ENCODE measurements at regions of chr15 and their contacts with region 1.

Region 1: DNA sequence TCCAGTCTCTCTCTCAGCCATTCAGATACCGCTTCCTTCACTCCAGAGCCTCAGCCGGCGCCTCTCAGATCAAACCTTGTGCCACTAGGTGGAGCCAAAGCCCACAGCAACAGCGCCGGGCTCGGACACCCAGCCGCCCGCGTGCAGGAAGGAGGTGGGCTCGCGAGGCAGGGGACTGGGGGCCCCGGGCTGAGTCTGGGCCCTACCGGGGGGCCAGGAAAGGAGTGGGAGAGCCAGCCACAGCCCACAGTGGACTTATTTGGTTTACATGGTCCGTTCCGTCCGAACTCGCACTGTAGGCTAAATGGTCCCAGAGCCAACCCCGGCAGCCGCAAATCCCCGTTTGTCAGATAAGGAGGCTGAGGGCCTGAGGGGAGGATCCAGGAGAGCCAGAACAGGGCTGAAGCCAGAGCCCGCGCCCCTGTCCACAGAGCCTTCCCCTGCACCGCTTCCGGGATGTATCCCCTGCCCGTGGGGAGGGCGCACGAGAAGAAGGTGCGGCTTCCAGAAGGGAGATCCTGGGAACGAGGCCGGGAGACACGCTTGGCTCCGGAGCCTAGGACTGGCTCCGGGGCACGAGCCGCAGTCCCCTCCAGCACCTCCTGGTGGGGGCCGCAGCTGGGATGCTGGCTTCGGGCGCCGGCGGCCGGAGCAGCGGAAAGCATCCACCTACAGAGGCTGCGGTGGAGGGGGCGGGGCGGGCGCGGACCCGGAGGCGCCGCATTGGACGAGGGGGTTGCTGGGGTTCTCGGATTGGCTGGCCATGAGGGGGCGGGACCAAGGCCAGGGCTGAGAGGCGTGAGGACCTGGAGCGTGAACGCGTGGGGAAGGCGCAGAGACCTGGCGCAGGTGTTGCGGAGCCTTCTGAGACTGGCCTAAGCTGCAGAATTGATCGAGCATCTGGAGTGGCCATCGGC is 6.5 kb upstream of the CYP11A1 start:
- DNase-seq: peak; percentile 94 to 95
- ATAC-seq: peak; percentile 98 to 100 (median 99)
- H3K4me3 ChIP-seq: peak overlapping the region; percentile 66
- H3K27ac ChIP-seq: no peak overlapping the region
- H3K4me1 ChIP-seq: no peaks in the 10 kb centered on the region
- H3K27me3 ChIP-seq: peaks cover 0 to 1% (median 0%) of the 10 kb centered on the region in 3 donors
- CTCF ChIP-seq: peak; percentile 91

Region 2: DNA sequence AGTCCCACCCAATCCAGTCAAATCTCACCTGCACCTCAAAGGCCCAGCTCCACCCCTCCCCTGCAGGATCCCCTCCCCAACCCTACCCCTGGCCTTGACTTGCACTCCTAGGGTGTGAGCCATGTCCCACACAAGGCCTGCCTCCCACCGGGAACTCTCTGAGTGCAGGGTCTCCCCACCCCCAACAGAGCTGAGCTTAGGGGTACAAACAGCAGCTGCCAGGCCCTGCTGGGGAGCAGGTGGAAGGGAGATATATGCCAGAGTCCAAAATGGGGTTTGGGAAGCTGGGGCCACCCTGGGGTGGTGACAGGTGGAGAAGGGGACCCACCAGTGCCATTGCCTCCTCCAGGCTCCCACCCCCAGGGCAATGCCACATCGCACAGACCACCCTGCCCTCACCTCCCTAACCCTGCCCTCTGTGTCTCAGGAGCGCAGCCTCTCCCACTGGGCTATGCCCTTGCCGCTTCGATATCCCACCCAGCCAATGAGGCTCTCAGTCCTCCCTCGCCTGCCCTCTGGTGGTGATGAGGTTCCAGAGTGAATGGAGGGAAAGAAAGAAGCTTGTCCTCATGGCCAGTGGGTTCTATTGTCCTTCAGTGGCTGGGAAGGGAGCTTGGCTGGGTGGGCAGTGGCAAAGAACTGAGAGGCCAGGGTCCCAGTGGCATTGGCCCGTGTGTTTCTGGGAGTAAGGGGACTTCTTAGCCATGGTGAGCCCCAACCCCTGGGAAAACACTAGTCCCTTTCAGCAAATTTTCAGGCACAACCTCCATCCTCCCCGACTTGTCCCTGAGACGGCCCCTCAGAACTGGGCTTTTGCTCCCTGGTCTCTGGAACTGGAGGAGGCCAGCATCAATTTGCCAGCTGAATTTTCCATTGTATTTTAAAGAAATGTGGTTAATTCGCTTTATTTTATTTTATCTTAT is 53.4 kb before region 1 on chr15:
- intact Hi-C with region 1: no loop called
- DNase-seq: peak; percentile 72 to 77
- ATAC-seq: no peak
- H3K4me3 ChIP-seq: no peak overlapping the region
- H3K27ac ChIP-seq: no peak overlapping the region
- H3K4me1 ChIP-seq: peaks cover 7% of the 10 kb centered on the region
- H3K27me3 ChIP-seq: no peaks in the 10 kb centered on the region
- CTCF ChIP-seq: peak; percentile 43

Region 3: DNA sequence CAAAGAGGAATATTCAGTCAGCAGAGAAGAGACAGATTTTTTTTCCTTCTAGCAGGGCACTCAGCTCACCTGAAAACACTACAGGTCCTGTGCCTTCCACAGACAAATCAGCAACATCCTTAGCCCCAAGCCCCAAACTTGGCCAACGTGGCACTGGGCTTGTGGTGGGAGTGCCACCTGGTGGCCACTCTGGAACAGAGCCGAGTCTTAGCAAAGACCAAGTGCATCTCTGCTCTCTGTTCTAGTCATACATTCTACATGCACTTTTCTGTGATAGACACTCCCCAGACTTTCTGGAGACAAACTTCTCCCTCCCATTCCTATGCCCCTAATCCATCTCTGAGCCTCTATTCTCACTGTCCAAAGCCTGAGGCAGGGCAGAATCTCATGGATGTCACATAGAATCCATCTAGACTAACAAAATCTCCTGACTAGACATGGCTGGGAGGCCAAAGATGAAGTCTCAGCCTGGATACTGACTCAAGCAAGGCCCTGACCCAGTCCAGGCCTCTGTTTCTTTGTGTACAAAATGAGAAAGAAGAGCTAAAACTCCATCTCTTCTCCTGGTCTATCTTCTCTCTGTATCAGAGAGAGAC is 64.8 kb after region 1 on chr15:
- intact Hi-C with region 1: loop called in 1 of 2 experiments (anchors 2 kb)
- DNase-seq: peak; percentile 66 to 83
- ATAC-seq: peak; percentile 73 to 80 (median 74)
- H3K4me3 ChIP-seq: no peak overlapping the region
- H3K27ac ChIP-seq: no peak overlapping the region
- H3K4me1 ChIP-seq: peaks cover 9% of the 10 kb centered on the region
- H3K27me3 ChIP-seq: no peaks in the 10 kb centered on the region
- CTCF ChIP-seq: peak; percentile 90

Region 4: GRCh38 chr15:74489518-74490338 is 115.7 kb after region 1 on chr15:
- intact Hi-C with region 1: loop called in 1 of 2 experiments (anchors 2 kb)
- DNase-seq: peak; percentile 40 to 68
- ATAC-seq: peak; percentile 64 to 86 (median 80)
- H3K4me3 ChIP-seq: no peak overlapping the region
- H3K27ac ChIP-seq: no peak overlapping the region
- H3K4me1 ChIP-seq: no peaks in the 10 kb centered on the region
- H3K27me3 ChIP-seq: no peaks in the 10 kb centered on the region
- CTCF ChIP-seq: peak; percentile 65

Region 5: DNA sequence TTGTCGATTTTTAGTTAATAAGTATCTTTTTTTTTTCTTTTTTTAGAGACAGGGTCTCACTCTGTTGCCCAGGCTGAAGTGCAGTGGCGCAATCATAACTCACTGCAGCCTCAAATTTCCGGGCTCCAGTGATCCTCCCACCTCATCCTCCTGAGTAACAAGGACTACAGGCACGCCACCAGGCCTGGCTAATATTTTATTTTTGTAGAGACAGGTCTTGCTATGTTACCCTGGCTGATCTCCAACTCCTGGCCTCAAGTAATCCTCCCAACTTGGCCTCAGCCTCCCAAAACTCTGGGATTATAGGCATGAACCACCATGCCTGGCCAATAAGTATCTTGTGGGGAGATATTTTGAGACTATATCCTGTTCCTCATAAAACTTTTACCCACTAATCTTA is 137.6 kb after region 1 on chr15:
- intact Hi-C with region 1: no loop called
- DNase-seq: no peak
- ATAC-seq: no peak
- H3K4me3 ChIP-seq: no peak overlapping the region
- H3K27ac ChIP-seq: no peak overlapping the region
- H3K4me1 ChIP-seq: no peaks in the 10 kb centered on the region
- H3K27me3 ChIP-seq: no peaks in the 10 kb centered on the region
- CTCF ChIP-seq: no peak

Region 6: DNA sequence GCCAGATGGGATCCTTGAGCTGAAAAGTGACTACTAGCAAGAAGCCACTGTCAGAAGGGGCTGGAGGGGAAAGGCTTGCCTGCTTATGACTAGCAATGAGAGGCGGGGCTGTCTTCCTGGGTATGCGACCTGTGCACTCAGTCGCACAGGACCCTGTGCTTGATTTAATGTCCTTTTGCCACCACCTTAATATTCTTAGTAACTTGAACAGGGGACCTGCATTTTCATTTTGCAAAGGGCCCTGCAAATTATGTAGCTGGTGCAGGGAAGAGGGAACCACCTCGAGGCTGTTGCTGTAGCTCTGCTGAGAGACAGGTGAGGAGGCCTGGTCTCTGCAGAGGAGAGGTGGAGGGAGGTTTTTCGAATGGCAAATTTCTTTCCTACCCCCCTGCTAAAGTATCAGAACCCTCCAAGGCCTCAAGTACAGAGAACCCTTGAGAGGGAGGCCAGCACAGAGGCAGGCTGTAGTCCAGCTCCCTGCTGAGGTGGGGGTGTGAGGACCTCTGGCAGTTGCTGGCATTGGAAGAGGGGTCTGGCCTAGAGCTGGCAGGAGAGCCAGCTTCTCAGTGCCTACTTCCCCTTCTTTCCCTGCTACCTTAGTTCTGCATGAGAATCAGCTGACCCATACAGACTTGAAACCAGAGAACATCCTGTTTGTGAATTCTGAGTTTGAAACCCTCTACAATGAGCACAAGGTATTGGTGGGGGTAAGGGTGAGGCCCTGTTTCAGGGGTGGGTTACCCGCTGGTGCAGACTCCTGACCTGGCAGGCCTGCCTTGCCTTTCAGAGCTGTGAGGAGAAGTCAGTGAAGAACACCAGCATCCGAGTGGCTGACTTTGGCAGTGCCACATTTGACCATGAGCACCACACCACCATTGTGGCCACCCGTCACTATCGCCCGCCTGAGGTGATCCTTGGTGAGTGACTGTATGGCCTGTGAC is 253.0 kb after region 1 on chr15:
- intact Hi-C with region 1: loop called in 1 of 2 experiments (anchors 5 kb)
- DNase-seq: no peak
- ATAC-seq: no peak
- H3K4me3 ChIP-seq: no peak overlapping the region
- H3K27ac ChIP-seq: no peak overlapping the region
- H3K4me1 ChIP-seq: no peaks in the 10 kb centered on the region
- H3K27me3 ChIP-seq: no peaks in the 10 kb centered on the region
- CTCF ChIP-seq: no peak

Region 7: DNA sequence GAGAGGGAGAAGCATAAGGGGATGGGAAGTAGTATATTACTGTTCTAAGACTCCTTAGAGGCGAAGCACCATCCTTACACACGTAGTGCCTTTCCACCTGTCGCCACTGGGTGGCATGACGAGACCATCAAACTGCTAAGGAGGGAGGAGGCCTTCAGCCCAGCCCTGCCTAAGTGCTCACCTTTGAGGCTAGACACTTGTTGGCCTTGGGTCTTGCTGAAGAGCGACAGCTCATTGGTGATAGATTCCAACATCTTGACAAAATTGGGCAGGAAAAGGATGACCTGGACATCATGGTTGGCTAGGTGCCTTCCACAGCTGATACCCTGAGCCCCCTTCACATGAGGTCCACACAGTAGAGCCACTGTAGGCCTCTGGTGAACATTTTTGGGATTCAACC is 261.2 kb after region 1 on chr15:
- intact Hi-C with region 1: loop called in 1 of 2 experiments (anchors 1 kb)
- DNase-seq: peak; percentile 66 to 83
- ATAC-seq: peak; percentile 78 to 84 (median 80)
- H3K4me3 ChIP-seq: no peak overlapping the region
- H3K27ac ChIP-seq: no peak overlapping the region
- H3K4me1 ChIP-seq: no peaks in the 10 kb centered on the region
- H3K27me3 ChIP-seq: no peaks in the 10 kb centered on the region
- CTCF ChIP-seq: peak; percentile 90

Region 8: DNA sequence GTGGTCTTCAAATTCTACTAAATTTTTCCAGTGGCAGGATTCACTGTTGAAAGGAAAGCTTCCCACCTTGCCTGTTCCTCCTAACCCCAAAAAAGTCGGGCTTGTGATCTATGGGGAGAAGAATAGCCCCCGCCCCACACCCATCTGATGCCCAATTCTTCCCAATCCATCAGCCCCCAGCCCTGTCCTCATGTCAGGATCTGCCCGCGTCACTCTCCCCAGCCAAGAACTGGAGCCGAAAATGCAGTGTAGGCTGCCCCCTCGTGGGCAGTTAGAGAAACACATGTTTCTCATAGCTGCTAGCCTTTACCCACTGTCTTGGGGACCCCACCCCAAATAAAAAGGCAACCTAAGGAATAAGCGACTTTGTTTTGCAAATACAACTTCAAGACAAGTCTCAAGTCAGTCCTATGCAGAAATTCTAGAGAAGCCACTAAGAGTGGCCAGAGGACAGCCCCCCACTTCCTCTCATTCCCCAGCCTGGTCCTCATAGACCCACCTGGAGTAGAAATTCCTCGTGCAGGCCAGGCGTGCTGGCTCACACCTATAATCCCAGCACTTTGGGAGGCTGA is 394.9 kb after region 1 on chr15:
- intact Hi-C with region 1: loop called in 1 of 2 experiments (anchors 5 kb)
- DNase-seq: peak in 1 of 2 donors; percentile 78
- ATAC-seq: peak; percentile 65 to 82 (median 76)
- H3K4me3 ChIP-seq: no peak overlapping the region
- H3K27ac ChIP-seq: no peak overlapping the region
- H3K4me1 ChIP-seq: no peaks in the 10 kb centered on the region
- H3K27me3 ChIP-seq: peaks cover 0 to under 1% (median 0%) of the 10 kb centered on the region in 3 donors
- CTCF ChIP-seq: peak; percentile 83

Region 9: DNA sequence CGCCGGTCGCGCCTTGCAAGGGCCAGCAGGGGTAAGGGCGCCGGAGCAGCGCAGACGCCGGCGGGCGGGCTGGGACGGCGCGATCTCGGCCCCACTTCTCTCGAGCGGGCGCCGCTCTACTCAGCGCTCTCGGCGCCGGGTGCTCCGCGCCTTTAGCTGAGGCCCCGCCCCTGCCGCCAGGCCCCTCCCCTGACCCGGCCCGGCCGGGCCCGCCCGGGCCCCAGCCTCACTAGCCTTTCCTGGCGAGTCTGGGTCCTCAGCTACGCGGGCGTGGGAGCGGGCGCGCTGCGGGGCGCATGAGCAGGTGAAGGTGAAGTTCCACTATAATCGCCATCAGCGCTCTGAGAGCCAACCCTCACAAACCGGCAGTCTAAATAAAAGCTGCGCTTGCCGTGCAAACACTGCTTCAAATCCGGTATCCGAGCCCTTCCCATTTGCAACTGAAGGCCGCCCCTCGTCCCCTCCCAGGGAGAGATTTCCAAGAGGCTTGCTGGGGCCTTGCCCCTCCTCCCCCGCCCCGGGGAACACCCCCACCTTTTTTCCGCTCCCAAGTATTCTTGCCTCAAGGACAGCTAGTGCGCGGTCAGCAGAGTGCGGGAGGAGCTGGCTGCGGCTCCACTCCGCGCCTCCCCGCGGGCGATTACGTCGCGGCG is 582.8 kb after region 1 on chr15 and contains the start of gene RPP25:
- intact Hi-C with region 1: loop called in 1 of 2 experiments (anchors 10 kb)
- DNase-seq: peak; percentile 78 to 84
- ATAC-seq: peak; percentile 83 to 90 (median 89)
- H3K4me3 ChIP-seq: peak within 1 kb of the TSS; percentile 72
- H3K27ac ChIP-seq: peak within 1 kb of the TSS; percentile 60
- H3K4me1 ChIP-seq: peaks cover 29% of the 10 kb centered on the region
- H3K27me3 ChIP-seq: peaks cover 0 to 50% (median 15%) of the 10 kb centered on the region in 3 donors
- CTCF ChIP-seq: no peak
- total RNA-seq, gene RPP25: 0.64 to 1.9 (median 1.4) TPM